Left cardiac atrium (tissue), 4 donors: ENCODE measurements at regions of chr12 and their contacts with region 1.

Region 1: GRCh38 chr12:54191550-54192022 is 2.8 kb upstream of the SMUG1 start:
- DNase-seq: peak; percentile 76
- ATAC-seq: peak; percentile 56 to 59

Region 2: GRCh38 chr12:54005853-54006686 is 185.5 kb before region 1 on chr12:
- intact Hi-C with region 1: loop called (anchors 2 kb)
- DNase-seq: peak; percentile 86
- ATAC-seq: peak; percentile 90